Activated CD4-positive, alpha-beta T cell treated with anti-CD3 and anti-CD28 coated beads for 36 hours (primary cell): ENCODE measurements at regions of chr16 and their contacts with region 1.

Region 1: DNA sequence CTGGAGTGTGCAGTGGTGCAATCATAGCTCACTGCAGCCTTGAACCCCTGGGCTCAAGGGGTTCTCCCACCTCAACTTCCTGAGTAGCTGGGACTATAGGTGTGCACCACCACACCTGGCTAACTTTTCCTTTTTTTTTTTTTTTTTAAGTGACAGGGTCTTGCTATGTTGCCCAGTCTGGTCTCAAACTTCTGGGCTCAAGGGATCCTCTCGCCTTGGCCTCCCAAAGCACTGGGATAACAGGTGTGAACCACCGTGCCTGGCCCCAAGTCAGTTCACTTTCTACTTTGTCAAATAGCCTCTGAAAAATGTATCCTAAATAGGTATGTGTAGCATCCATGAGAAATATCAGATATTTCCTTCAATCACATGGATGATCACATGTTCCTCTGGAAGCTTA is 9.9 kb upstream of the NFAT5 start:
- DNase-seq: no peak
- ATAC-seq: no peak
- H3K4me3 Mint-ChIP-seq: no peak overlapping the region
- H3K27ac Mint-ChIP-seq: no peak overlapping the region
- H3K4me1 Mint-ChIP-seq: peaks cover 20% of the 10 kb centered on the region
- H3K27me3 Mint-ChIP-seq: no peaks in the 10 kb centered on the region

Region 2: DNA sequence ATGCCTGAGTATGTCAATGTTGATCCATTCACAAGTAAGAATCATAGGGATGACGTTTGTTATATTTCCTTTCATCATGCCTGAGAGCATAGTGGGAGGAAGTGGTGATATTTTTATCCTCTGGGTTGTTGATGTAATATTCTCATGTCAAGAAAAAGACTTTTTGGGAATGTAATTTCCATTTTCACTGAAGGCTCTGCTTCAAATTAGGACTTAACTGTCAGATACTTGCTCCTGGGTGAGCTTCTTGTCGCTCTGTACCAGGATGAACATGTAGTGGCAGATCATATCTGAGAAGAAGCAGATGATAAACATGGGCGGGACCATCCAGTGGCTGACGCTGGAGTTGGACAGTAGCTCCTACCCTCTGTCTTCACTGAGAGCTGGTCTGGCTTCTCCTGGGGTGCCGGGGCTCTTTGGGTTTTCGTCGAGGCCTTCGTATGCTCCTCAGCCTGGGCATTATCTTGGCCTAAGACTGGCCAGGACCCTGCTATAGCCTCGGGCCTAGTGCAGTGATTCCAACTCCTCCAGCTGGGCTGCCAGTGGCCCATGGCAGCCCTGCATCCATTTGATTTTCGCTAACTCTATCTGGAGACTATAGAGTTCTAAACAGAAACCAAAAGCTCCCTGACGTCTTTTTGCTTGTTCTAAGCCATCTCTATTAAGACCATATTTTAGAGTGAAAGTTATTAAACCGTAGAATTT is 111.8 kb before region 1 on chr16:
- CTCF ChIA-PET with region 1: no interaction called
- POLR2A ChIA-PET with region 1: no interaction called
- intact Hi-C with region 1: no loop called
- DNase-seq: peak; percentile 47
- ATAC-seq: peak; percentile 71
- H3K4me3 Mint-ChIP-seq: peak overlapping the region; percentile 65
- H3K27ac Mint-ChIP-seq: peak overlapping the region; percentile 94
- H3K4me1 Mint-ChIP-seq: peaks cover 36% of the 10 kb centered on the region
- H3K27me3 Mint-ChIP-seq: no peaks in the 10 kb centered on the region

Region 3: DNA sequence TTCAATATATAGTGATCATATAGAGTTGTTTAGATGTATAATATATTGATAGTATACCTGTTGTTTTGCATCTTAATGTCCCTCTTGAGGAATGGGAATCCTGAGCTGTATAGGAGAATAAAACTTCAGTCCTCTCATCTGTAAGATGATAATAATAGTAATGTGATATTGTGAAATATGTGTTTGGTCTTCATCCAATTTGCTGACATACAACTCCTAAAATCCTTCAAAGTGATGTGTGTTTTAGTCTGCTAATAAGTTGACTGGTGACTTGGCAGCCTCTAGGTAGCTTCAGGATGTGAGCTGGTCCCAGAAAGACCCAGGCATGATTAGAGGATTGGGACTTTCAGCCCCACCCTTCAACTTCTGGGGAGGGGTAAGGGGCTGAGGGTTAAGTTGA is 12.9 kb before region 1 on chr16:
- CTCF ChIA-PET with region 1: no interaction called
- POLR2A ChIA-PET with region 1: no interaction called
- intact Hi-C with region 1: loop called in 1 of 2 experiments (anchors 1 kb)
- DNase-seq: no peak
- ATAC-seq: no peak
- H3K4me3 Mint-ChIP-seq: no peak overlapping the region
- H3K27ac Mint-ChIP-seq: no peak overlapping the region
- H3K4me1 Mint-ChIP-seq: no peaks in the 10 kb centered on the region
- H3K27me3 Mint-ChIP-seq: no peaks in the 10 kb centered on the region

Region 4: DNA sequence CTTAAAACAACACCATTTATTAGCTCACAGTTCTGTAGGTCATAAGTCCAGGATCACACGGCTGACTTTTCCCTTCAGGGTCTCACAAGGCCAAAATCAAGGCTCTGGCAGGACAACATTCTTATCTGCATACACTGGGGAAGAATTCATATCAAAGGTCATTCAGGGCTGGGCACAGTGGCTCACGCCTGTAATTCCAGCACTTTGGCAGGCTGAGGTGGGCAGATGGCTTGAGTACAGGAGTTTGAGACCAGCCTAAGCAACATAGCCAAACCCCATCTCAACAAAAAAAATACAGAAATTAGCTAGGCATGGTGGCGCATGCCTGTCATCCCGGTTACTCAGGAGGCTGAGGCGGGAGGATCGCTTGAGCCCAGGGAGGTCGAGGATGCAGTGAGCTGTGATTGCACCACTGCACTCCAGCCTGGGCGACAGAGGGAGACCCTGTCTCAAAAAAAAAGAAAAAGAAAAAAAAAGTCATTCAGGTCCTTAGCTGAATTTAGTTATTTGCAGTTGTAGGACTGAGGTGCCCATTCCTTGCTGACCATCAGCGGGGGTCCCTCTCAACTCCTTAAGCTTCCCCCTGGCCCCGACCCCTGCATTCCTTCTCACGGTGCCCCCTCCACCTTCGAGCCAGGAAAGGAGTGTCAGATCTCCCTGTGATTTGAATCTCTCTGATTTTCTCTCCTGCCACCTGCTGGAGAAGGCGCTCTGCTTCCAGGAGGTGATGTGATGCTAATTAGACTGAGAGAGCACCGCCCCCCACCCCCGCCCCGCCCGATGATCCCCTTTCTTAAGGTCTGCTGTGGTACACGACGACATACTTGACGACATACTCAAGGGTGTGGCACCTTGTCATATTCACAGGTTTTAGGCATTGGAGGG is 303.5 kb after region 1 on chr16:
- CTCF ChIA-PET with region 1: no interaction called
- POLR2A ChIA-PET with region 1: no interaction called
- intact Hi-C with region 1: no loop called
- DNase-seq: peak; percentile 32
- ATAC-seq: peak; percentile 30
- H3K4me3 Mint-ChIP-seq: no peak overlapping the region
- H3K27ac Mint-ChIP-seq: no peak overlapping the region
- H3K4me1 Mint-ChIP-seq: no peaks in the 10 kb centered on the region
- H3K27me3 Mint-ChIP-seq: no peaks in the 10 kb centered on the region